Caco-2 (cell line): ENCODE measurements at regions of chr2 and their contacts with region 1.

Region 1: GRCh38 chr2:109644576-109645275 is 30.6 kb downstream of the SOWAHC start:
- DNase-seq: peak; percentile 91 to 93
- H3K4me3 ChIP-seq: no peak overlapping the region
- H3K4me3 Mint-ChIP-seq: peak overlapping the region; percentile 55
- H3K27ac Mint-ChIP-seq: peak overlapping the region; percentile 78
- H3K4me1 ChIP-seq: peaks cover 47% of the 10 kb centered on the region
- H3K4me1 Mint-ChIP-seq: peaks cover 25% of the 10 kb centered on the region
- H3K27me3 ChIP-seq: no peaks in the 10 kb centered on the region
- H3K27me3 Mint-ChIP-seq: no peaks in the 10 kb centered on the region
- CTCF ChIP-seq: no peak

Region 2: DNA sequence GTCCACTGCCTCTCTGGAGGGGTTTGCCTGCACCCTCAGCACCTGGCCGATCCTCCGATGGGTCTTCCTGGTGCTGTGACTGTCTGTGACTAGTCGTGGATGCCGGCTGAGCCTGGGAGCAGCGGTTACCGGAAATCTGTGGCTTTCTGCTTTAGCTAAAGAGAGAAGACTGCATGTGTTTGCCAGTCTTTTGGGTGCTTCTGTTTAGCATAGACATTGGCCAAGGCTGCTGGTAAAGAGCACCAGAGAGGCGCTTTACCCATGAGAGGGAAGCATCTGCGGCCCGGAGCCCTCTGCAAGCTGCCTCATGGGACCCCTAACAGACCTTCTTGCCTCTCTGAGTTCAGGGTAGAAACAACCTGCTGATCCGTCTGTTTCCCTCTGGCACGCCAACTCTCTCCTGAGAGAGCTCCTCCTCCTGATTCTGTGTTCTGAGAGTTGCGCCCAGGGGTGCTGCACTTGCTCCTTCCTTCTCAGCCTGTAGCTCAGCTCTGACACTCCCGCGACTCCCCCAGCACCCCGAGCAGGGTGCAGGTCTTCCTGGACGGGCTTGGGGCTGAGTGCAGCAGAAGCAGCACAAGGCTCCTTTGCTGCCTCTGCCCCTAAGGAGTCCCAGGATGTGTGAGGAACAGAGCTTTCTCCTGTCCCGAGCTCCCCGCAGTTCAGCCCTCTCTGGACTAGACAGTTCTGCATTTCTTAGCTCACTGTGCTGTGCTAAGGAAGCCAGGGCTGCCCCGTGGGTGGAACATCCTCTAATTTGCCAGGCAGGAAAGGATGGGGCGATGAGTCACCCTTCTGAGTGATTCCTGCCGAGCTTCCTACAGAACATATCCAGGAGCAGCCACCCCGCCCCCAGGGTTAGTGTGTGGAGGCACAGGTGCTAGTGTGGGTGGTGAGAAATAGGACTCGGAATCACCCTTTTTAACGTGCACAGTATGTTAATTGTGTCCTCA is 312.6 kb before region 1 on chr2:
- CTCF ChIA-PET with region 1: no interaction called
- POLR2A ChIA-PET with region 1: no interaction called
- intact Hi-C with region 1: no loop called
- DNase-seq: no peak
- H3K4me3 ChIP-seq: no peak overlapping the region
- H3K4me3 Mint-ChIP-seq: no peak overlapping the region
- H3K27ac Mint-ChIP-seq: no peak overlapping the region
- H3K4me1 ChIP-seq: no peaks in the 10 kb centered on the region
- H3K4me1 Mint-ChIP-seq: no peaks in the 10 kb centered on the region
- H3K27me3 ChIP-seq: no peaks in the 10 kb centered on the region
- H3K27me3 Mint-ChIP-seq: peaks cover 30% of the 10 kb centered on the region
- CTCF ChIP-seq: no peak

Region 3: DNA sequence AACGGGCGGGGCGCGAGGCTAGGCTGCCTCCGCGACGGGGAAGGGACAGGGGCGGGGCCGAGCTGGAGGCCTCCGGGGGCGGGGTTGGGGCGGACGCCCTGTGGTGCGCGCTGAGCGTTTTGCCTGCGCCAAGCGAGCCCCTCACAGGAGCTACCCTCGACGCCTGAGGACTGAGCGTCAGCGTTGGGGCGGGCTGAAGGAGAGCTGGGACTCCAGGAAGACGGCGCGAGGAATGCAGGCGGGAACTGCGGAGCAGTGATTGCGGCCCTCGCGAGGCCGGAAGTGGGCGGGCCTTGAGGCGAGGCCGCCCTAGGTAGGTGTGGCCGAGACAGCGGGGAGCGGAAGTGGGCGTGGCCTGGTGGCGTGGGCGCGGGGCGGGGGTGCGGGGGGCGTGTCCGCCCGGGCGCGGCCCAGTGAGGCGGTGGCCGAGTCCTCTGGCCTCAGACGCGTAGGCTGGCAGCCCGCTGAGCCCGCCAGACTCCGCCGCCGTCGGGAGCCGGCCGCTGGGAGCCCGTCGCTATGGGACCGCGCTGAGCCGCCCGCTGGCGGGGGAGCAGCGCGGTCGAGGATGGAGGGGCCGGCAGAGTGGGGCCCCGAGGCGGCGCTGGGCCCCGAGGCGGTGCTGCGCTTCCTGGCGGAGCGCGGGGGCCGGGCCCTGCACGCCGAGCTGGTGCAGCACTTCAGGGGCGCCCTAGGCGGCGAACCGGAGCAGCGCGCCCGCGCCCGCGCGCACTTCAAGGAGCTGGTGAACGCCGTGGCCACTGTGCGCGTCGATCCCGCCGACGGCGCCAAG is 30.6 kb before region 1 on chr2 and contains the starts of genes SEPTIN10 and SOWAHC:
- CTCF ChIA-PET with region 1: interaction called, 12 read pairs
- POLR2A ChIA-PET with region 1: interaction called, 16 read pairs
- intact Hi-C with region 1: loop called (anchors 1 kb)
- DNase-seq: peak; percentile 99 to 100
- H3K4me3 ChIP-seq: peak within 1 kb of the TSS; percentile 73
- H3K4me3 Mint-ChIP-seq: peak within 1 kb of the TSS; percentile 95
- H3K27ac Mint-ChIP-seq: peak within 1 kb of the TSS; percentile 95
- H3K4me1 ChIP-seq: peaks cover 32% of the 10 kb centered on the region
- H3K4me1 Mint-ChIP-seq: peaks cover 24% of the 10 kb centered on the region
- H3K27me3 ChIP-seq: no peaks in the 10 kb centered on the region
- H3K27me3 Mint-ChIP-seq: no peaks in the 10 kb centered on the region
- CTCF ChIP-seq: no peak
- total RNA-seq, gene SEPTIN10: 77.3 and 83.7 TPM in 2 replicates
- total RNA-seq, gene SOWAHC: 20.3 and 21.4 TPM in 2 replicates

Region 4: DNA sequence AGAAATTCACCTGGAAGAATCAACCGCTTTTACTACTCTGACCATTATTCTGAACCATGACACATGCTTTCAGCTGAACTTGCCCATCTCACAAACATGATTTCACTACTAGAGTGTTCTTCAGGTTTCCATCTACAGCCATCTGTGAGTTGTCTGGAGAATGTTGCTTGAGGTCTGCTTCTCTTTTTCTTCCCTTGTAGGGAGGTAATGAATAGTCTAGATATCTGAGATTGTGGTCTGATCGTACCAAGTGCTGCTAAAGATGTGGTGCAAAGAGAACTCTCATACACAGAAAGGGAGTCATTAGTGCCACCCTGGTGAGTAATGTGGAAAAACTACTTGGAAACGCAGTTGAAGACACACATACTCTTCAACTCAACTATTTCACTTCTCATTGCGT is 20.4 kb before region 1 on chr2:
- CTCF ChIA-PET with region 1: interaction called, 5 read pairs
- POLR2A ChIA-PET with region 1: interaction called, 6 read pairs
- intact Hi-C with region 1: loop called (anchors 1 kb)
- DNase-seq: no peak
- H3K4me3 ChIP-seq: no peak overlapping the region
- H3K4me3 Mint-ChIP-seq: peak overlapping the region; percentile 50
- H3K27ac Mint-ChIP-seq: peak overlapping the region; percentile 73
- H3K4me1 ChIP-seq: peaks cover 30% of the 10 kb centered on the region
- H3K4me1 Mint-ChIP-seq: peaks cover 27% of the 10 kb centered on the region
- H3K27me3 ChIP-seq: no peaks in the 10 kb centered on the region
- H3K27me3 Mint-ChIP-seq: no peaks in the 10 kb centered on the region
- CTCF ChIP-seq: no peak

Region 5: DNA sequence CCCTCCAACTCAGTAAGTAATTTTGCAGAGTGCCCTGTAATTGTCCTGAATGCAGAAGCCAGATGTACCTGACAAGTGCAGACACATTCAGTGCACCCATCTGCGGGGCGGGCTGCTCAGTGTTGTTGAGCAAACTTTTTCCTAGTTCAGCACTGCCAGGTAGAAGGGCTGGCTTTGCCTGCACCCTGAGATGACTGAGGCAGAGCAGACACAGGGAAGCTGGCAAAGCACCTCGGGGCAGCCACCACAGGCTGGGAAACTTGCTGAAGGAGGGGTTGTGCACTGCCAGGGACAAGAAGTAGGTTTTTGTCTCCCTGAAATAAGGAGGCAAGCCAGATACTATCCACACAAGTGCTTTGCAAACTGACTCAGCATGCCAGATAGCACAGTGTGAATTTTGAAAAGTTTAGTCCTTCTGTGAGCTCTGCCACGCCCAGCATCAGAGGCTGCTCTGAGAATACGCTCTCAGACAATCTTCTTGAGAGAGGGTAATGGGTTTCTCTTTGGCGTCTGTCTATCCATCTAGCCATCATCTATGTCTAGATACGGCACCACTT is 31.7 kb after region 1 on chr2:
- CTCF ChIA-PET with region 1: no interaction called
- POLR2A ChIA-PET with region 1: no interaction called
- intact Hi-C with region 1: loop called (anchors 2 kb)
- DNase-seq: no peak
- H3K4me3 ChIP-seq: no peak overlapping the region
- H3K4me3 Mint-ChIP-seq: no peak overlapping the region
- H3K27ac Mint-ChIP-seq: peak overlapping the region; percentile 14
- H3K4me1 ChIP-seq: peaks cover 53% of the 10 kb centered on the region
- H3K4me1 Mint-ChIP-seq: peaks cover 56% of the 10 kb centered on the region
- H3K27me3 ChIP-seq: no peaks in the 10 kb centered on the region
- H3K27me3 Mint-ChIP-seq: no peaks in the 10 kb centered on the region
- CTCF ChIP-seq: no peak